CD8-positive, alpha-beta memory T cell (primary cell): ENCODE measurements at regions of chr20 and their contacts with region 1.

Region 1: DNA sequence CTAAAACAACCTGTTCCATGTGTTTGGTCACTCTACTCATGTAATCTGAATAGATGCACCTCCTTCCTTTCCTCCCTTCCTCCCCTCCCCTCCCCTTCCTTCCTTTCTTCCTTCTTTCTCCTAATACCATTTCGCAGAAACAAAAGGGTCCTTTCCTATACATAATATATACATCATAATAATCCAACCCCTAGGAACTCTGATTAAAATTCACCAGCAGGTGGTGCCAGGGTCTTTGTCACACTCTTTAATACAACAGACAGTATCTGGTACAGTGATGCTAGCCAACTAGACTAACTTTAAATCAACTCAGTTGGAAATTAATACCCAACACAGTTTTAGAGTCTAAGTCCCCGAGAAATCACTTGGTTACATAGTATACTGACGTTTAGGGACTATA is 181.2 kb upstream of the SHLD1 start:
- DNase-seq: peak; percentile 4 to 57 (median 34)
- H3K4me3 ChIP-seq: no peak overlapping the region
- H3K4me3 Mint-ChIP-seq: no peak overlapping the region
- H3K27ac ChIP-seq: no peak overlapping the region
- H3K27ac Mint-ChIP-seq: peak overlapping the region in 5 of 8 donors; percentile 14 to 71 (median 54)
- H3K4me1 ChIP-seq: peaks cover 11% of the 10 kb centered on the region
- H3K4me1 Mint-ChIP-seq: peaks cover 7 to 26% (median 21%) of the 10 kb centered on the region in 3 donors
- H3K27me3 ChIP-seq: no peaks in the 10 kb centered on the region
- H3K27me3 Mint-ChIP-seq: no peaks in the 10 kb centered on the region

Region 2: DNA sequence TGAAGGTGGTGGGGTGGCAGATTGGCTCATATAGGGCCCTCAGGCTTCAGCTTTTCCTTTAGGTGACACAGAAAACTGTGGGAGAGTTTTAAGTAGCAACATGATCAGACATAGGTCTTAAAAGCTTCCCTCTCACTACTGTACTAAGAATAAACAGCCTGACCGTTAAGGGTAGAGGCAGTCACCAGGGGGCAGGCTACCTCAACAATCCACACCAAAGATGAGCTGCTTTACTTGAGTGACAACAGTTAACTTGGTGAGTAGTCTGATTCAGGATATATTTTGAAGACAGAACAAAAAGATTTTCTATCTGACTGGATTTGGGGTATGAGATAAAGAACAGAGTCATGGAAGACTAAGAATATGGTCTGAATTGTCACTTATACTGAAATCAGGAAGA is 11.9 kb before region 1 on chr20:
- CTCF ChIA-PET with region 1: interaction called, 10 read pairs
- POLR2A ChIA-PET with region 1: no interaction called
- DNase-seq: peak; percentile 23 to 52 (median 27)
- H3K4me3 ChIP-seq: no peak overlapping the region
- H3K4me3 Mint-ChIP-seq: no peak overlapping the region
- H3K27ac ChIP-seq: no peak overlapping the region
- H3K27ac Mint-ChIP-seq: peak overlapping the region in 6 of 8 donors; percentile 0 to 80 (median 36)
- H3K4me1 ChIP-seq: no peaks in the 10 kb centered on the region
- H3K4me1 Mint-ChIP-seq: peaks cover 7 to 23% (median 17%) of the 10 kb centered on the region in 3 donors
- H3K27me3 ChIP-seq: no peaks in the 10 kb centered on the region
- H3K27me3 Mint-ChIP-seq: no peaks in the 10 kb centered on the region

Region 3: DNA sequence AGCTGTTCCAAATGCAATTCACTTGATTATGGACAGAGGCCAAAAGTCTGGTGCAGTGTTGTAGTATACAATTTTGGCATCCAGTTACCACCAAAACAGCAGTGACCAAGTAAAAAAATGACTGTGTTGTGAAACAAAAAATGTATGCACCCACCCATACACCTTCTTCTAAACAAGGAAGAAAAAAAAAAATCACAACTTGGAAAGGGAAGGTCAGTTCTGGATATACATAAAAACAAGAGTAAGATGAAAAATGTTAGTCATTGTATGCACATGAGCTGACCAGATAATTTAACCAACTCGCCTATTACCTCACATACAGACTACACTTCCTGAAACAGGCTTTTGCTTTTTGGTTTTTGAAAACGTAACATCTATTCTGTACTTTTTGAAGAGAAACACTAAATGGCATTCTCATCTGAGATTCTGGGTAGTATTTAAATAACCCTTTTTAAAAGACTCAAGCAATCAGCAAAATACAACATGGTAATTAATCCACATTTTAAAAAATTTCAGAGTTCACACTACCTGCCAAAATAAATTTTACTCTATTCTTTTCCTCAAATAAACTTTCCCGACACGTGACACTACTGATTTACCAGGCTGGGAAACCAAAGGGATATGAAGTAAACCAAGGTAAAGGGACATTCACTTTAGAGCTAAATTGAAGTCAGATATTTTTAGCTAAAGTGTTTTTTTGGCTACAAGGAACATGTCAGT is 39.6 kb after region 1 on chr20:
- CTCF ChIA-PET with region 1: interaction called, 11 read pairs
- POLR2A ChIA-PET with region 1: no interaction called
- DNase-seq: no peak
- H3K4me3 ChIP-seq: peak overlapping the region; percentile 95
- H3K4me3 Mint-ChIP-seq: peak overlapping the region; percentile 96 to 99 (median 98)
- H3K27ac ChIP-seq: peak overlapping the region; percentile 99
- H3K27ac Mint-ChIP-seq: peak overlapping the region; percentile 99 to 100 (median 100)
- H3K4me1 ChIP-seq: peaks cover 52% of the 10 kb centered on the region
- H3K4me1 Mint-ChIP-seq: peaks cover 53 to 67% (median 67%) of the 10 kb centered on the region in 3 donors
- H3K27me3 ChIP-seq: no peaks in the 10 kb centered on the region
- H3K27me3 Mint-ChIP-seq: peaks cover 0 to 7% of the 10 kb centered on the region in 2 donors

Region 4: DNA sequence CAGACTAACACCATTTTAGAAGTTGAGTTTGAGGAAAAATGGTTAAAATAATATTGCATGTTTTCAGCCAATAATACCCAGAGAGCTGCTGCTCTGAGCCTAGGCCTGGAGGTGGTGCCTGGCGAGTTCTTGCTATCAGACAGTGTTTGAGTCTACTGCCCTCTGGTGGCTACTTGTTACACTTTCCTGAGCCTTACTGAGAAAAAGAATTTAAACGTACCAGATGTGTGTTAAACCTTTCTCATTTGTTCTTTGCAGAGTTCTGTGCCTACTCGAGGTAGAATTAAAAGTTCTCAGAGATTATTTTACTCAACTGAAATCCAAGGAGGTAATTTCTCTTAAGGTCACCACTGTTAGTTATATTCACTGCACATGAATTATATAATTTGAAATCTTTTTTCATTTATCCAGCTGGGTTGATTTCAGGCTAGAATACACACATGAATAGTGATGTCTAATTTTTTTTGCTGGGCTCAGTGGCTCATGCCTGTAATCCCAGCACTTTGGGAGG is 219.4 kb after region 1 on chr20:
- CTCF ChIA-PET with region 1: interaction called, 43 read pairs
- POLR2A ChIA-PET with region 1: no interaction called
- DNase-seq: peak; percentile 57 to 84 (median 74)
- H3K4me3 ChIP-seq: no peak overlapping the region
- H3K4me3 Mint-ChIP-seq: no peak overlapping the region
- H3K27ac ChIP-seq: no peak overlapping the region
- H3K27ac Mint-ChIP-seq: peak overlapping the region in 4 of 8 donors; percentile 39 to 87 (median 45)
- H3K4me1 ChIP-seq: no peaks in the 10 kb centered on the region
- H3K4me1 Mint-ChIP-seq: peaks cover 2 to 18% (median 14%) of the 10 kb centered on the region in 3 donors
- H3K27me3 ChIP-seq: no peaks in the 10 kb centered on the region
- H3K27me3 Mint-ChIP-seq: no peaks in the 10 kb centered on the region